Ovary (tissue), 10 donors: ENCODE measurements at regions of chr12 and their contacts with region 1.

Region 1: GRCh38 chr12:95164656-95165055 is 52.6 kb downstream of the FGD6 start:
- DNase-seq: no peak
- H3K4me3 ChIP-seq: no peak overlapping the region
- H3K27ac ChIP-seq: peak overlapping the region in 1 of 2 donors; percentile 51
- H3K4me1 ChIP-seq: peaks cover 6% of the 10 kb centered on the region
- H3K27me3 ChIP-seq: no peaks in the 10 kb centered on the region
- CTCF ChIP-seq: no peak
- EP300 ChIP-seq: no peak
- POLR2A ChIP-seq: no peak

Region 2: DNA sequence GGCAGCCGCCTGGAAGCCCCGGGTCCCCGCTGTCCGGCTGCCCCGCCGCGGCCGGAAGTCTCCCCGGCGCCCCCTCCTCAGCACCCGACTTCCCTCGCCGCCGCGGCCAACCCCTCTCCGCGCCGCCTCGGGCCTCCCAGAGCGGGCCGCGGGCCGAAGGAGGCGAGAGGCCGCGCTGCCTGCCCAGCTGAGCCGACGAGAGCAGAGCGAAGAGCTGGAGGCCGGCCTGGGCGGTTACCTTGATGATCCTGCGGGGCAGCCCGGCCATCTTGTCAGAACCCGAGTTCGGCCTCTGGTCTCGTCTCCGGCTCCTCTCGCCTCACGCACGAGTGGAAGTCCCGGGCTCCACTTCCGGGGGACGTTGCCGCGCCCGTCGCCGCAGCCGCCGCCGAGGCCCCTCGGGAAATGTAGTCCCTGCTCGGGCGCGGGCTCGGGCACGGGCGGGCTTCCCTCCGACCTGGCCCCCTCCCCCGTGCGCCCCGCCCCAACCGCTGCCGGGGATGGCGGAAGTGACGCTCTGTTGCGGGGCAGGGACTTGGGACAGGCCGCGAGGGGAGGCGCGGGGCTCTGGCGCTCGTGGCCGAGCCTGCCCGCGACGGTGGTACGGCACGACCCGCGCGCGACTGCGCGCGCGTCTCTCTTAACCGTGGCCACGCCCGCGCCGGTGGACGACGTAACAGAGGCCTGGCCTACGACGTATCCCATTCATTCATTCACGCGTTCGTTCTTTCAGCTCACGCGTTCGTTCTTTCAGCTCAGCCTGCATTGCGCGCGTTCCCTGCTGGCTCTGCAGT is 1722.8 kb before region 1 on chr12 and contains the start of gene UBE2N:
- intact Hi-C with region 1: no loop called
- DNase-seq: peak; percentile 94 to 97 (median 96)
- H3K4me3 ChIP-seq: peak within 1 kb of the TSS; percentile 98
- H3K27ac ChIP-seq: peak within 1 kb of the TSS; percentile 76 to 85
- H3K4me1 ChIP-seq: peaks cover 6% of the 10 kb centered on the region
- H3K27me3 ChIP-seq: no peaks in the 10 kb centered on the region
- CTCF ChIP-seq: no peak
- EP300 ChIP-seq: no peak
- POLR2A ChIP-seq: peak; percentile 60
- total RNA-seq, gene UBE2N: 18.8 to 102 (median 63.3) TPM

Region 3: DNA sequence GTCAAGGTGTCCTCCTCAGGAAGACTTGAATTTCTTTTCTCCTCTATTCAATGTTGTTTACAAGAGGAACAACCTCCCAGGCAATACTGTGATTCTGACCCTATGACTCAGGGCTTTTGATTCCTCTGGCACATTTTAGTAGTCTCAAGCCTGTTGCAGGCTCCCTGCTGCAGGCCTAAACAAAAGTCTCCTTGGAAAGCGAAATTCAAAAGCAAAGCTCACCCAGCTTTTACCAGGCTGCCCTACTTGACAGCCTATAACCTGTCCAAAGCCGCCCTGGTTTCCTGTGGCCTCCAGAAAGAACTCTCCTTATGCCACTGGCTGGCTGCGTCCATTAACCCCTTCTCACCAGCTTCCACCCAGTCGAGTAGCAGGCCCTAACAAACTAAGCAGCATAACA is 41.0 kb after region 1 on chr12:
- intact Hi-C with region 1: loop called in 1 of 4 experiments (anchors 5 kb)
- DNase-seq: peak; percentile 28 to 48 (median 42)
- H3K4me3 ChIP-seq: no peak overlapping the region
- H3K27ac ChIP-seq: peak overlapping the region in 1 of 2 donors; percentile 75
- H3K4me1 ChIP-seq: peaks cover 17% of the 10 kb centered on the region
- H3K27me3 ChIP-seq: no peaks in the 10 kb centered on the region
- CTCF ChIP-seq: no peak
- EP300 ChIP-seq: no peak
- POLR2A ChIP-seq: no peak

Region 4: GRCh38 chr12:95217377-95218149 is 52.9 kb after region 1 on chr12 and contains the starts of genes FGD6 and VEZT:
- intact Hi-C with region 1: loop called in 1 of 4 experiments (anchors 5 kb)
- DNase-seq: peak; percentile 98 to 99 (median 98)
- H3K4me3 ChIP-seq: peak within 1 kb of the TSS; percentile 81
- H3K27ac ChIP-seq: peak within 1 kb of the TSS; percentile 94 to 97
- H3K4me1 ChIP-seq: peaks cover 7% of the 10 kb centered on the region
- H3K27me3 ChIP-seq: no peaks in the 10 kb centered on the region
- CTCF ChIP-seq: peak in 2 of 3 donors; percentile 76 to 84
- EP300 ChIP-seq: peak; percentile 24
- POLR2A ChIP-seq: peak; percentile 82
- total RNA-seq, gene FGD6: 7.0 to 18.7 (median 15.8) TPM
- total RNA-seq, gene VEZT: 52.1 to 67.7 (median 53.5) TPM